Sigmoid colon (tissue), 7 donors: ENCODE measurements at regions of chr19 and their contacts with region 1.

Region 1: GRCh38 chr19:46990991-46991676 is 28.5 kb upstream of the NPAS1 start:
- DNase-seq: peak; percentile 93
- H3K4me3 ChIP-seq: no peak overlapping the region
- H3K27ac ChIP-seq: peak overlapping the region; percentile 51 to 64 (median 58)
- H3K4me1 ChIP-seq: peaks cover 0 to 17% (median 12%) of the 10 kb centered on the region in 4 donors
- H3K27me3 ChIP-seq: no peaks in the 10 kb centered on the region
- CTCF ChIP-seq: peak; percentile 66 to 88 (median 75)
- EP300 ChIP-seq: no peak
- POLR2A ChIP-seq: no peak

Region 2: GRCh38 chr19:46759817-46760333 is 231.3 kb before region 1 on chr19:
- intact Hi-C with region 1: loop called (anchors 5 kb)
- DNase-seq: peak; percentile 89
- H3K4me3 ChIP-seq: no peak overlapping the region
- H3K27ac ChIP-seq: peak overlapping the region; percentile 20 to 78 (median 68)
- H3K4me1 ChIP-seq: peaks cover 0 to 24% (median 20%) of the 10 kb centered on the region in 4 donors
- H3K27me3 ChIP-seq: no peaks in the 10 kb centered on the region
- CTCF ChIP-seq: no peak
- EP300 ChIP-seq: peak in 1 of 4 donors; percentile 56
- POLR2A ChIP-seq: no peak

Region 3: GRCh38 chr19:48044561-48044960 is 1053.4 kb after region 1 on chr19:
- intact Hi-C with region 1: no loop called
- DNase-seq: no peak
- H3K4me3 ChIP-seq: no peak overlapping the region
- H3K27ac ChIP-seq: no peak overlapping the region
- H3K4me1 ChIP-seq: no peaks in the 10 kb centered on the region
- H3K27me3 ChIP-seq: peaks cover 0 to 8% (median 0%) of the 10 kb centered on the region in 3 donors
- CTCF ChIP-seq: no peak
- EP300 ChIP-seq: no peak
- POLR2A ChIP-seq: no peak